ENCODE measurements at regions of chr4 and their contacts with region 1.

Region 1: DNA sequence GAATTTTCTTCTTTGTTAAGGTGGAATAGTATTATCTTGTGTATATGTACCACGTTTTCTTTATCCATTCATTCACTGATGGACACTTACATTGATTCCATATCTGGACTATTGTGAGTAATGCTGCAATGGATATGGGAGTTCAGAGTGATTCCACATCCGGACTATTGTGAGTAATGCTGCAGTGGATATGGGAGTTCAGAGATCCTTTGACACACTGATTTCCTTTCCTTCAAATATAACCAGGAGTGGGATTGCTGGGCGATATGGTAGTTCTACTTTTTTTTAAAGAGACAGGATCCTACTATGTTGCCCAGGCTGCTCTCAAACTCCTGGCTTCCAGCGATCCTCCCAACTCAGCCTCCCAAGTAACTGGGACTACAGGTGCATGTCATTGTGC is 12.1 kb downstream of the TMEM156 start:
- DNase-seq: no peak
- ATAC-seq: no peak
- H3K4me3 ChIP-seq: no peak overlapping the region
- H3K27ac ChIP-seq: no peak overlapping the region
- H3K4me1 ChIP-seq: no peaks in the 10 kb centered on the region
- H3K27me3 ChIP-seq: no peaks in the 10 kb centered on the region
- CTCF ChIP-seq: no peak

Region 2: GRCh38 chr4:39044364-39044955 is 24.3 kb after region 1 on chr4:
- CTCF ChIA-PET with region 1: no interaction called
- POLR2A ChIA-PET with region 1: interaction called, 10 read pairs
- in situ Hi-C with region 1: no loop called
- intact Hi-C with region 1: no loop called
- DNase-seq: no peak
- ATAC-seq: peak; percentile 84
- H3K4me3 ChIP-seq: peak overlapping the region; percentile 80 to 84
- H3K27ac ChIP-seq: peak overlapping the region; percentile 99
- H3K4me1 ChIP-seq: peaks cover 43% of the 10 kb centered on the region
- H3K27me3 ChIP-seq: no peaks in the 10 kb centered on the region
- CTCF ChIP-seq: no peak

Region 3: DNA sequence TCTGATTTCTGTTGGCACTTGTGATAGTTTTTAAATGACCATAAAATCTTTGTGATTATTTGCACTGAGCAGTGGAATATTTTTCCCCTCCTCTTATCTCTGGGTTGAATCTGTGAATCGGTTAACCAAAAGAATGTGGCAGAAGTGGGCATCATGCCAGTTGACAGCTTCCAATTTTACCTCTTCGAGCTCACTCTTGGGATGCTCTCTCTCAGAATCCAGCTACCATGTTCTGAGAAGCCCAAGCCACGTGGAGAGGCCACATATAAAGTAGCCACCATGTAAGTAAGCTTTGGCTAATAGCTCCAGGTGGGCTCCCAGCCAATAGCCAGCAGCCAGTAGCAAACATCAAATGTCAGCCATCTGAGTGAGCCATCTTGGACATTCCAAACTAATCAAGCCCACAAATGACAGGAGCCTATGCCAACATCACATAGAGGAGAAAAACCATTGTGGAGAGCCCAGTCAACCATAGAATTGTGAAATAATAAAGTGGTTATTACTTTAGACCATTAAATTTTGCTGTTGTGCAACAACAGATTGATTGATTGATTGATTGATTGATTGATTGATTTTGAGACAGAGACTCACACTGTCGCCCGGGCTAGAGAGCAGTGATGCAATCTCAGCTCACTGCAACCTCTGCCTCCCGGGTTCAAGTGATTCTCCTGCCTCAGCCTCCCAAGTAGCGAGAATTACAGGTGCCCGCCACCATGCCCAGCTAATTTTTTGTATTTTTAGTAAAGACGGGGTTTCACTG is 149.5 kb after region 1 on chr4:
- CTCF ChIA-PET with region 1: no interaction called
- POLR2A ChIA-PET with region 1: interaction called, 12 read pairs
- in situ Hi-C with region 1: no loop called
- intact Hi-C with region 1: no loop called
- DNase-seq: no peak
- ATAC-seq: peak; percentile 38; the same call in 1 of the 2 replicates
- H3K4me3 ChIP-seq: no peak overlapping the region
- H3K27ac ChIP-seq: no peak overlapping the region
- H3K4me1 ChIP-seq: no peaks in the 10 kb centered on the region
- H3K27me3 ChIP-seq: no peaks in the 10 kb centered on the region
- CTCF ChIP-seq: no peak

Measured in Panc1 (cell line).